HCT116 (cell line): ENCODE measurements at regions of chr18 and their contacts with region 1.

Region 1: GRCh38 chr18:63320046-63320689 is 599 bp upstream of the BCL2 start:
- DNase-seq: peak; percentile 29
- ATAC-seq: peak; percentile 78
- H3K4me3 ChIP-seq: peak overlapping the region; percentile 68 to 69
- H3K27ac ChIP-seq: peak overlapping the region; percentile 43; the same call in 1 of the 2 replicates
- H3K4me1 ChIP-seq: peaks cover 5 to 24% of the 10 kb centered on the region in 2 experiments; a peak in 2 of 4 replicates
- H3K27me3 ChIP-seq: 0 out of 2 replicates have a peak, but pooled peaks cover 7% of the 10 kb centered on the region
- CTCF ChIP-seq: no peak
- POLR2A ChIP-seq: no peak
- RAD21 ChIP-seq: no peak

Region 2: DNA sequence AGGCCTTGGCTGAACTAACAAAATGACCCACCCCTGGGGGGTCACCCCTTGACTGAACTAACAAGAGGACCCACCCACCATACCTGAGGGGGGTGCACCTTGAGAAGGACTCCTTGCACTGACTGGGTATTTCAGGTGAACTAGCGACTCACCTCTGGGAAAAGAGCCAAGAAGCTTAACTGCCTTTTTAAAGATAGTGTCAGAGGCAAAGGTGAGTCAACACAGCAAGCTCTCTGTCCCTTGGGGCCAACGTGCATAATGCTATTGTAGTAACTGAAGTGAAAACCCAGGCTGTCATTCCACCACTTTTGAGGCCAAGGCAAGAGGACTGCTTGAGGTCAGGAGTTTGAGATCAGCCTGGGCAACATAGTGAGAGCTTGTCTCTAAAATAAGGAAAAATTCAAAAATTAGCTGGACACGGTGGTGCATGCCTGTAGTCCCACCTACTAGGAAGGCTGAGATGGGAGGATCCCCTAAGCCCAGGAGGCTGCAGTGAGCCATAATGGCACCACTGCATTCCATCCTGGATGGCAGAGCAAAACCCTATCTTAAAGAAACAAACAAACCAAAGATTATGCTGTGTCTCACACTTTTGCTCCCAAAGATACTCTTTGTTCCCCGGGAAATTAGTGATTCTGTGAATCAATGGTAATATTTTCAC is 833.7 kb before region 1 on chr18:
- CTCF ChIA-PET with region 1: no interaction called
- POLR2A ChIA-PET with region 1: no interaction called
- RAD21 ChIA-PET with region 1: no interaction called
- intact Hi-C with region 1: loop called (anchors 10 kb)
- DNase-seq: peak; percentile 94
- ATAC-seq: peak; percentile 86
- H3K4me3 ChIP-seq: peak overlapping the region in 1 of 2 experiments; percentile 48; a peak in 2 of 4 replicates
- H3K27ac ChIP-seq: peak overlapping the region; percentile 78; the same call in 1 of the 2 replicates
- H3K4me1 ChIP-seq: peaks cover 20 to 33% of the 10 kb centered on the region in 2 experiments
- H3K27me3 ChIP-seq: no peaks in the 10 kb centered on the region
- CTCF ChIP-seq: no peak
- POLR2A ChIP-seq: no peak
- RAD21 ChIP-seq: no peak; the same call in 1 of the 2 replicates

Region 3: DNA sequence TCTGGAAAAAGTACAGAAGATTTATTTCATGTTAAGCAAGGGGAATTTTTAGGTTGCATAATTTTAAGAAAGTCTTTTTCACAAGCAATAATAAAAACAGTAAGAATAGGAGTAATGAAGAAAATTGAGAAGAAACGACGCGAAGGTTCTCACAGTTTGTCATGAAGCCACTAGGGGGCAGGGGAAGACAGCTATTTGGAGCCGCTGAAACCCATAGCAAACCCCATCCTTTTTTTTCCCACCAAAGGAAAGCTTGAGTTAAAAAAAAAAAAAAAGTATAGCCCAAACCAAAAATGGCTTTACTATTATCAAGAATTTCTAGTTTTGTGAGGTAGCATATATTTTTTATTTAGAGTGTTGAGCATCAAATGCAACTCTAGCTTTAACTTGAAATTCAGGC is 303.9 kb before region 1 on chr18:
- CTCF ChIA-PET with region 1: interaction called, 18 read pairs
- POLR2A ChIA-PET with region 1: no interaction called
- RAD21 ChIA-PET with region 1: no interaction called
- intact Hi-C with region 1: loop called (anchors 1 kb)
- DNase-seq: peak; percentile 32
- ATAC-seq: peak; percentile 79
- H3K4me3 ChIP-seq: no peak overlapping the region
- H3K27ac ChIP-seq: no peak overlapping the region
- H3K4me1 ChIP-seq: no peaks in the 10 kb centered on the region
- H3K27me3 ChIP-seq: no peaks in the 10 kb centered on the region
- CTCF ChIP-seq: peak; percentile 73 to 87 (median 73)
- POLR2A ChIP-seq: no peak
- RAD21 ChIP-seq: peak; percentile 82

Region 4: GRCh38 chr18:63025251-63026090 is 294.7 kb before region 1 on chr18:
- CTCF ChIA-PET with region 1: interaction called, 12 read pairs
- POLR2A ChIA-PET with region 1: no interaction called
- RAD21 ChIA-PET with region 1: no interaction called
- intact Hi-C with region 1: loop called (anchors 1 kb)
- DNase-seq: no peak
- ATAC-seq: peak; percentile 84
- H3K4me3 ChIP-seq: no peak overlapping the region
- H3K27ac ChIP-seq: no peak overlapping the region
- H3K4me1 ChIP-seq: no peaks in the 10 kb centered on the region
- H3K27me3 ChIP-seq: no peaks in the 10 kb centered on the region
- CTCF ChIP-seq: peak; percentile 38 to 56 (median 54); a peak in 5 of 6 replicates
- POLR2A ChIP-seq: no peak
- RAD21 ChIP-seq: peak; percentile 70

Region 5: DNA sequence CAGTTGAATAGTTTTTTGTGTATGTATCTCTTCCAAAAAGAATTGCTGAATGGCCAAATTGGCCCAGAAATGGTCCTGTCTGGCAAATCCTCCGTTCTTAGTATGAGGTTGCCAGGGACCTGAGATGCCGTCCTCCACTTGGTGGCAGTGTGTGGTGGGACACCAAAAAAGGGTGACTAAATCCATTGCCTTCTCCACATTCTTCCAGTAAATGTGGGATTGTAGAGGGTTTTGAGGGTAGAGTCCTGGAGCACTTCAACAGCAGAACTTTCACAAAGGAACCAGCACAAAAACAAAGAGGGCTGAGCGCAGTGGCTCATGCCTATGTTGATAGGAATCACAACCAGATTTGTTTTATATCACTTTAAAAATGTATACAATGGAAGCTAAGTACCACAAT is 200.5 kb before region 1 on chr18:
- CTCF ChIA-PET with region 1: interaction called, 5 read pairs
- POLR2A ChIA-PET with region 1: no interaction called
- RAD21 ChIA-PET with region 1: no interaction called
- intact Hi-C with region 1: loop called (anchors 1 kb)
- DNase-seq: peak; percentile 31
- ATAC-seq: peak; percentile 92
- H3K4me3 ChIP-seq: no peak overlapping the region
- H3K27ac ChIP-seq: no peak overlapping the region
- H3K4me1 ChIP-seq: no peaks in the 10 kb centered on the region
- H3K27me3 ChIP-seq: peaks cover 6% of the 10 kb centered on the region; the same call in 1 of the 2 replicates
- CTCF ChIP-seq: peak; percentile 43 to 66 (median 53); a peak in 4 of 6 replicates
- POLR2A ChIP-seq: no peak
- RAD21 ChIP-seq: peak; percentile 66

Region 6: GRCh38 chr18:63131106-63131958 is 188.8 kb before region 1 on chr18:
- CTCF ChIA-PET with region 1: interaction called, 12 read pairs
- POLR2A ChIA-PET with region 1: no interaction called
- RAD21 ChIA-PET with region 1: no interaction called
- intact Hi-C with region 1: loop called (anchors 1 kb)
- DNase-seq: no peak
- ATAC-seq: peak; percentile 77
- H3K4me3 ChIP-seq: no peak overlapping the region
- H3K27ac ChIP-seq: no peak overlapping the region
- H3K4me1 ChIP-seq: no peaks in the 10 kb centered on the region
- H3K27me3 ChIP-seq: peaks cover 4% of the 10 kb centered on the region; the same call in 1 of the 2 replicates
- CTCF ChIP-seq: peak; percentile 42 to 62 (median 52)
- POLR2A ChIP-seq: no peak
- RAD21 ChIP-seq: peak; percentile 65

Region 7: DNA sequence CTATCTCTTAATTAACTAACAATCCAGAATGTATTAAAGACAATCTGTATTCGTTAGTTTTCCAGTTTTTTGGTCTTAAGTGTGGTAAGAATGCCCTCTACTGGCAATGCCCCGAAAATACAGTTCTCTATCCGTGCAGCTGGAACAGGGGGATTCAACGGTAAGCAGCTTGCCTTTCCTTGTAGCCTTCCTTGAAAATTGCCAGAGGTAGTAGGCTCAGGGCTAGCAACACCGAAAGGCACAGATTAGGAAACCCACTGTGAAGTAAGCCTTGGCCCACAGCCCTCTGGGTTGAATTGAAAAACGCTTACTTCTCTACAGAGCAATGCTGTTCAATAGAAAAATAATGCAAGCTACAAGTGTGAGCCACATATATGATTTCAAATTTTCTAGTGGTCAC is 119.2 kb after region 1 on chr18:
- CTCF ChIA-PET with region 1: interaction called, 5 read pairs
- POLR2A ChIA-PET with region 1: no interaction called
- RAD21 ChIA-PET with region 1: no interaction called
- intact Hi-C with region 1: loop called (anchors 5 kb)
- DNase-seq: peak; percentile 70
- ATAC-seq: peak; percentile 93
- H3K4me3 ChIP-seq: no peak overlapping the region
- H3K27ac ChIP-seq: no peak overlapping the region
- H3K4me1 ChIP-seq: 0 out of 4 replicates have a peak, but pooled peaks cover 0 to 2% of the 10 kb centered on the region in 2 experiments
- H3K27me3 ChIP-seq: no peaks in the 10 kb centered on the region
- CTCF ChIP-seq: peak; percentile 73 to 89 (median 80)
- POLR2A ChIP-seq: no peak
- RAD21 ChIP-seq: peak; percentile 88